ENCODE measurements at regions of chr15 and their contacts with region 1.

Region 1: DNA sequence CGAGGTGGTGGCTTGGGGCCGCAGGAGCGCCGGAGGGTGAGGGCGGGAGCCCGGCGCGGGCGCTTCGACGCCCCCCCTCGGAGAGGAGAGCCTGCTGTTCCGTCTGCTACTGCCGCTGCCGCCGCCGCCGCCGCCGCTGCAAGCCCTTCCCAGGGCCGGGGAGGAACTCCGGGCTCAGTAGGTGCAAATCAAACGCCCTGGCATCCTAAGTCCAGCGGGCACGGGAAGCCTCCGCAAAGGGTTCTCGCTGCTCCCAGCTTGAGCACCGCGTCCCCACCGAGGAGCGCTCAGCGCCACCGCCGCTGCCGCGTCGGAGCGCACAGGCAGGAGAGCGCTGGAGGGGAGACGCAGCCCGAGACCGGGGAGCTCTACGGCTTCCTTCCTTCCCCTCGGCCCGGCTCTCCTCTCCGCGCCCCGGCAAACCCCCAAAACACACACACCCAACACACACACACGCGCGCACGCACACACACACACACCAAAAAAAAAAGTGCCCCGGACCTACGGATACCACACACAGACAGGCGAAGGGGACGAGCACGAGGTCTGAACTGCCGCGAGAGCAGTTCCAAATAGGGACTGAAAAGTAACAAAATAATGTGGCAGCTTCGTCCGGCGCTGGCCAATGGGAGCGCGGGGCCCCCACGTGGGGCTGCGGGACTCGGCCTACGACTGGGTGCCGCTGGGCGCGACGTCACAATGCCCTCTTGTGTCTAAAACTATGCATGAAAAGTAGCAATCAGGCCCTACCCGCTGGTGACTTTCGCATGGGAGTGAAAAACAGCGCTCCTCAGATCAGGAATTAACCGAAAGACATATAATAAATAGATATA is at the start of gene TLE3:
- DNase-seq: peak; percentile 98 to 100 (median 99)

Region 2: GRCh38 chr15:69576035-69576526 is 521.5 kb before region 1 on chr15:
- intact Hi-C with region 1: loop called (anchors 5 kb)
- DNase-seq: peak; percentile 45 to 95 (median 70)

Region 3: DNA sequence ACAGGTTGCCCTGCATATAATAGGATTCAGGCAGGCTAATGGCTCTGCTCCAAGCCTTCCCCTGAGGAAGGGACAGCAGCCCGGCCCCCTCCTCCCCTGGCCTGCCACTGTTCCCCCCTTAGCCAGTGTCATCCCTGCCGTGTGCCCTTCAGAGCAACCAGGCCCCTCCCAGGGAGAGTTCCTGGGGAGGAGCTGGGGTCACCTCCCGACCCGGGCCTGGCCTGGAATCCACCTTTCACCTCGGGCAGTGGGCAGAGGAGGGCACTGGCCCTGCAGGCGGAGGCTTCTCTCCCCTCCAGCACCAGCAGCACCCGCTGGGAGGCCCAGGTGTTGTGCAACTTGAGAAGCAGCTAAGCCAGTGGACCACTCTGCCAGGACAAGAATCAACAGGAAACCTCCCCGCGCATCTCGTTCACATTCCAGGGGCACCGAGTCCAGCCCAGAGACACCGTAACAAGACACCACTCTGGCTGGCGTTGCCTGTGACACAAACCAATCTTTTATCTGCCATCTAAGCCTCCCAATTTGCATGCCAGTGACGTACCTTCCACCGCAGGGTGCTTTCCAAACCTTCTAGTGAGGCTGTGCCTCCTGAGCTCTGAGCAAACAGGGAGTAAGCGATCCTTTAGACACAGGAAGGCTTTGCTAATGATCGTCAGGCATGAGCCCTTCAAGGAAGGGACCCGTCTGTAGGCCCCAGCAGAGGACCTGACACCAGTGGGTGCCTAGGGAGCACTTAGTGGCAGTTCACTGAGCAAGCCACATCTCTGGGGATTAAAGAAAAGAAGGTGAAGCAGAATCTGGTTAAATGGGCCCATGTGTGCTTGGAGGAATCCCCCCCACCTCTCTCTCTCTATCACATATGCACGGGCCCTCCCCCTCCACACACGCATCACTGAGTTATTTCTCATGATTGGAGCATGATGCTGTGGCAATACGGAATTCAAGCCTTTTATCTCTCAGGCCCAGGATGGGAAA is 99.0 kb after region 1 on chr15:
- intact Hi-C with region 1: loop called (anchors 5 kb)
- DNase-seq: no peak

Region 4: GRCh38 chr15:70259028-70259424 is 161.5 kb after region 1 on chr15:
- intact Hi-C with region 1: loop called (anchors 10 kb)
- DNase-seq: peak in 7 of 10 donors; percentile 27 to 91 (median 46)

Region 5: DNA sequence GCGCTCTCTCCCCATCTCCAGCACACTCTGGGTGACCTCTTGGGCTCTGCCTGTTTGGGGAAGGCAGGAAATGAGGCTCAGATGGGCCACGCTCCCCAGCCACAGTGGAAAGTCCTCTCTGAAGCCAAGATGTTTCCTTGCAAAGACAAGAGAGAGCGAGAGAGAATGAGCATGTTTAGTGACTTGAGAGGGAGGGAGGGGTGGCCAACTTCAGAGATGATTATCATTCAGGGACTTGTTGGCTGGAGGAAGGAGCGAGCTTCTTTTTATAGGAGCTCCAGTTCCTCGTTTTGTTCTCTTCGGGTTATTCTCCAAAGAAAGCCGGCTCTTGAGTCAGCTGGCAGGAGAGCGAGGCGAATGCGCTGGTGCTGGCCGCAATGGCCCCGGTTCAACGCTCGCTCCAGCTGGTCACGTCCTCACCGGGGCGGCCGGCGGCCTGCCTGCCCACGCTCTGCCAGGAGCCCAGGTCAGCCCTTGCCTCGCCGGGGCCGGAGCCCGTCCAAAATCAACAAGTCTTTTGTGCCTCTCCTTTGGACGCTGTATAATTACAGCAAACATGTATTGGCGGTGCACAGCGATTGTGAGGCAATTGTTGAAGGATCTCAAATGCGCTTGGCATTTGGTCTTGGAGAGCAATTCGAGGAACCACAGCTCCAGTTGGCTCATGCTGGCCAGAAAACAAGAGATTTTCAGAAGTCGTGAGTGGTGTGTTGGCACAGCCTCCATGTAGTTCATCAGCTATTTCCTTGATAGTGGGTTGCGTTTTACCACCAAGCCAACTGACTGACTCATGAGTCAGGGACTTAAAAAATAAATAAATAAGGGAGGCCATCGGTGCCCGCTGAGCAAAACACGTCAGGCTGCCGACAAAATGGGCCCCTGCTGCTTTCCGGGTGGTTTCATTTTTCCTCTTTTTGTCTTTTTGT is 377.2 kb after region 1 on chr15:
- intact Hi-C with region 1: loop called (anchors 10 kb)
- DNase-seq: peak in 9 of 10 donors; percentile 26 to 91 (median 52)